Motor neuron (in vitro differentiated cells): ENCODE measurements at regions of chr4 and their contacts with region 1.

Region 1: GRCh38 chr4:185471235-185472102 is at the start of gene CCDC110:
- ATAC-seq: peak; percentile 84 to 96 (median 95)
- H3K4me3 ChIP-seq: peak within 1 kb of the TSS; percentile 54 to 93 (median 76)
- H3K27ac ChIP-seq: peak within 1 kb of the TSS; percentile 54 to 64
- H3K4me1 ChIP-seq: peaks cover 0 to 5% of the 10 kb centered on the region in 2 donors
- total RNA-seq, gene CCDC110: 0.42 to 7.6 (median 1.2) TPM

Region 2: GRCh38 chr4:185599553-185600243 is 128.2 kb after region 1 on chr4:
- in situ Hi-C with region 1: loop called in 1 of 9 experiments (anchors 10 kb)
- ATAC-seq: peak in 3 of 8 experiments; percentile 66 to 86 (median 75)
- H3K4me3 ChIP-seq: no peak overlapping the region
- H3K27ac ChIP-seq: no peak overlapping the region
- H3K4me1 ChIP-seq: peaks cover 8 to 21% of the 10 kb centered on the region in 2 donors